ENCODE measurements at regions of chr7 and their contacts with region 1.

Region 1: DNA sequence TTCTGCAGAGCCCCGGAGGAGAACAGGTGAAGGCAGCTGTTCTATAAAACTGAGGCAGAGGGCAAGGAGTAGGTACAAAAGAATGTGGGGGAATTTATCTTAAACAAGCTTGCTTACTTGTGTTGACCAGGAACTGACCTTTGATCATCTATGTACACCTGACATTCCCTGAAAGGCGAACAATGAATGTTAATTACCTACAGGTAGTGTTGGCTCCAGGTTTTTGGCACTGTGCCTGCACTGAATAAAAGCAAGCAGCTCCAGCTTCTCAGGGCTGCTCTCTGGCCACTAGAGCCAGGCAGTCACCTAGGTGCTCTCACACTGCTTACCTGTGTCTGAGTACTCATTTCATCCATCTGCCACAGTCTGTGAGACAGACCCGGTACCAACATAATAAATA is 87.0 kb downstream of the RAPGEF5 start:
- DNase-seq: peak; percentile 81
- H3K4me3 Mint-ChIP-seq: peak overlapping the region; percentile 38
- H3K27ac Mint-ChIP-seq: peak overlapping the region; percentile 67
- H3K4me1 Mint-ChIP-seq: peaks cover 45% of the 10 kb centered on the region
- H3K27me3 Mint-ChIP-seq: no peaks in the 10 kb centered on the region
- CTCF ChIP-seq: no peak

Region 2: GRCh38 chr7:22452142-22452959 is 182.4 kb after region 1 on chr7:
- CTCF ChIA-PET with region 1: no interaction called
- intact Hi-C with region 1: loop called (anchors 5 kb)
- DNase-seq: peak; percentile 91
- H3K4me3 Mint-ChIP-seq: peak overlapping the region; percentile 69
- H3K27ac Mint-ChIP-seq: peak overlapping the region; percentile 29
- H3K4me1 Mint-ChIP-seq: peaks cover 27% of the 10 kb centered on the region
- H3K27me3 Mint-ChIP-seq: no peaks in the 10 kb centered on the region
- CTCF ChIP-seq: peak; percentile 98

Measured in Calu3 (cell line).